B cell (primary cell): ENCODE measurements at regions of chr14 and their contacts with region 1.

Region 1: GRCh38 chr14:50860478-50861086 is 11.3 kb upstream of the ABHD12B start:
- DNase-seq: peak; percentile 90
- ATAC-seq: peak; percentile 71
- H3K4me3 ChIP-seq: peak overlapping the region; percentile 58 to 92 (median 69)
- H3K4me3 Mint-ChIP-seq: peak overlapping the region; percentile 95
- H3K27ac ChIP-seq: peak overlapping the region; percentile 34 to 44
- H3K27ac Mint-ChIP-seq: peak overlapping the region; percentile 91
- H3K4me1 ChIP-seq: peaks cover 9 to 14% of the 10 kb centered on the region in 2 donors
- H3K4me1 Mint-ChIP-seq: peaks cover 15% of the 10 kb centered on the region
- H3K27me3 ChIP-seq: no peaks in the 10 kb centered on the region
- H3K27me3 Mint-ChIP-seq: peaks cover 2% of the 10 kb centered on the region
- CTCF ChIP-seq: peak; percentile 87

Region 2: DNA sequence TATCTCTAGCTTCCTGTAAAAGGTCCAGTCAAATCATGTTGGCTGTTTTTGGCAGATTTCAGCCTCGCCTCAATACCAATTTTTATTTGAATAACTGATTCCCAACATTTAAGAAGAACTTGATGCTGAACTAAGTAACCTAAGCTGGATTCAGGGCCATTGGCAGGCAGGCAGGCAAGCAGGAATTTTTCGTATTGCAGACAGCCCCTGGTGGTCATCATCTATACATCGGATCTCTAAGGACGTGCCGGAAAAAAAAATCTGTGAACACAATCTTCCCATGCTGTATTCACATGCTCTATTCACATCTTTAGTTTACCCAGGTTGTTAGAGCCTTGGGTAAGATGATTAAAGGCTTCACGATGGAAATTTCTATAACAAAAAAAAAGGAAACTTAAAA is 751.2 kb before region 1 on chr14:
- CTCF ChIA-PET with region 1: no interaction called
- POLR2A ChIA-PET with region 1: no interaction called
- intact Hi-C with region 1: no loop called
- DNase-seq: no peak
- ATAC-seq: no peak
- H3K4me3 ChIP-seq: no peak overlapping the region
- H3K4me3 Mint-ChIP-seq: no peak overlapping the region
- H3K27ac ChIP-seq: peak overlapping the region in 1 of 2 donors; percentile 85
- H3K27ac Mint-ChIP-seq: no peak overlapping the region
- H3K4me1 ChIP-seq: peaks cover 28 to 34% of the 10 kb centered on the region in 2 donors
- H3K4me1 Mint-ChIP-seq: peaks cover 40% of the 10 kb centered on the region
- H3K27me3 ChIP-seq: no peaks in the 10 kb centered on the region
- H3K27me3 Mint-ChIP-seq: no peaks in the 10 kb centered on the region
- CTCF ChIP-seq: no peak

Region 3: DNA sequence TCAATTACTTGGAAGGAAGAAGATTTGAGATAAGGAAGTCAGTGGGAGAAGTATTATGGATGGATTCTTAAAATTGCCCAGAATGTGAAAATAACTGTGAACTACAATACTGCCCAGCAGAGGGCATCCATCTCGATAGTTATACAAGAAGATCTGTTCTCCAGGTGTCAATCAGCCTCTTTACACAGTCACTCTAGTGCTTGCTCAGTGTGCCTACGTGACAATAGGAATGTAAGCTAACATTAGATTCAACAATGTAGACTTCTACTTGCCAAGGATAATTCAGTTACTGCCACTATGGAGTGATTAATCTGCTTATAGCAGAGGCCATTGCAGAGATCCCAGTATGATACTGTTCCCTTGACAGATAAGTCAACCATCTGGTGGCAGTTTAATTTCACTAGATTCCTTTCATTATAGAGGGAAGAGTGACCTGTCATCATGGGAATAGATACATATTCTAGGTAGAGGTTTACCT is 317.6 kb before region 1 on chr14:
- CTCF ChIA-PET with region 1: interaction called, 13 read pairs
- POLR2A ChIA-PET with region 1: no interaction called
- intact Hi-C with region 1: loop called (anchors 1 kb)
- DNase-seq: peak; percentile 65
- ATAC-seq: peak; percentile 58
- H3K4me3 ChIP-seq: no peak overlapping the region
- H3K4me3 Mint-ChIP-seq: no peak overlapping the region
- H3K27ac ChIP-seq: no peak overlapping the region
- H3K27ac Mint-ChIP-seq: no peak overlapping the region
- H3K4me1 ChIP-seq: no peaks in the 10 kb centered on the region
- H3K4me1 Mint-ChIP-seq: peaks cover 8% of the 10 kb centered on the region
- H3K27me3 ChIP-seq: no peaks in the 10 kb centered on the region
- H3K27me3 Mint-ChIP-seq: no peaks in the 10 kb centered on the region
- CTCF ChIP-seq: peak; percentile 76

Region 4: DNA sequence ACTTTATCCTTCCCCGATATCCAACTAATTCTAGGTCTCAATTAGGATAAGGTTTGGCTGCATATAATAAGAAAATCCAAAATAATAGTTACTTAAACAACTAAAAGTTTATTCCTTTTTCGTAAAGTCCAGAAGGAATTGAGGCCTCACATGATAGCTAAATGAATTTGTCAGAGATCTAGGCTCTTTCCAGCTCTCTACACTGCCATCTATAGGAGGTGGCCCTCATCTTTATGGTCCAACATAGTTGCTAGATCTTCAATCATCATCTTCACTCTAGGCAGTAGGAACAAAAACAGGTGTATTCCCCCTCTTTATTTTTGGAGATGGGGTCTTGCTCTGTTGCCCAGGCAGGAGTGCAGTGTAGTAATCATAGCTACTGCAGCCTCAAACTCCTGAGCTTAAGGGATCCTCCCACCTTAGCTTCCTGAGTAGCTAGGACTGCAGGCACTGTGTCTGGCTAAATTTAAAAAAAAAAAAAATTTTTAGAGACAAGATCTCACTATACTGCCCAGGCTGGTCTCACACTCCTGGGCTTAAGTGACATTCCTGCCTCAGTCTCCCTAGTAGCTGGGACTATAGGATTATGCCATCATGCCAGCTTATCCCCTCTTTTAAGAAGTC is 146.0 kb before region 1 on chr14:
- CTCF ChIA-PET with region 1: interaction called, 30 read pairs
- POLR2A ChIA-PET with region 1: no interaction called
- intact Hi-C with region 1: no loop called
- DNase-seq: peak; percentile 67
- ATAC-seq: peak; percentile 61
- H3K4me3 ChIP-seq: no peak overlapping the region
- H3K4me3 Mint-ChIP-seq: no peak overlapping the region
- H3K27ac ChIP-seq: no peak overlapping the region
- H3K27ac Mint-ChIP-seq: no peak overlapping the region
- H3K4me1 ChIP-seq: no peaks in the 10 kb centered on the region
- H3K4me1 Mint-ChIP-seq: no peaks in the 10 kb centered on the region
- H3K27me3 ChIP-seq: no peaks in the 10 kb centered on the region
- H3K27me3 Mint-ChIP-seq: no peaks in the 10 kb centered on the region
- CTCF ChIP-seq: peak; percentile 74

Region 5: GRCh38 chr14:50773632-50774541 is 86.7 kb before region 1 on chr14:
- CTCF ChIA-PET with region 1: interaction called, 258 read pairs
- POLR2A ChIA-PET with region 1: interaction called, 7 read pairs
- intact Hi-C with region 1: loop called (anchors 1 kb)
- DNase-seq: peak; percentile 48
- ATAC-seq: peak; percentile 56
- H3K4me3 ChIP-seq: no peak overlapping the region
- H3K4me3 Mint-ChIP-seq: no peak overlapping the region
- H3K27ac ChIP-seq: peak overlapping the region in 1 of 2 donors; percentile 11
- H3K27ac Mint-ChIP-seq: peak overlapping the region; percentile 17
- H3K4me1 ChIP-seq: peaks cover 13 to 16% of the 10 kb centered on the region in 2 donors
- H3K4me1 Mint-ChIP-seq: peaks cover 16% of the 10 kb centered on the region
- H3K27me3 ChIP-seq: no peaks in the 10 kb centered on the region
- H3K27me3 Mint-ChIP-seq: no peaks in the 10 kb centered on the region
- CTCF ChIP-seq: peak; percentile 87

Region 6: GRCh38 chr14:50798048-50798421 is 62.5 kb before region 1 on chr14:
- CTCF ChIA-PET with region 1: interaction called, 178 read pairs
- POLR2A ChIA-PET with region 1: no interaction called
- intact Hi-C with region 1: no loop called
- DNase-seq: peak; percentile 69
- ATAC-seq: peak; percentile 78
- H3K4me3 ChIP-seq: no peak overlapping the region
- H3K4me3 Mint-ChIP-seq: peak overlapping the region; percentile 2
- H3K27ac ChIP-seq: no peak overlapping the region
- H3K27ac Mint-ChIP-seq: peak overlapping the region; percentile 53
- H3K4me1 ChIP-seq: peaks cover 56 to 64% of the 10 kb centered on the region in 2 donors
- H3K4me1 Mint-ChIP-seq: peaks cover 74% of the 10 kb centered on the region
- H3K27me3 ChIP-seq: no peaks in the 10 kb centered on the region
- H3K27me3 Mint-ChIP-seq: no peaks in the 10 kb centered on the region
- CTCF ChIP-seq: no peak

Region 7: GRCh38 chr14:50830932-50831725 is 29.5 kb before region 1 on chr14 and contains the start of gene NIN:
- CTCF ChIA-PET with region 1: interaction called, 47 read pairs
- POLR2A ChIA-PET with region 1: interaction called, 24 read pairs
- intact Hi-C with region 1: loop called (anchors 1 kb)
- DNase-seq: peak; percentile 88
- ATAC-seq: peak; percentile 83
- H3K4me3 ChIP-seq: peak within 1 kb of the TSS; percentile 70 to 90 (median 71)
- H3K4me3 Mint-ChIP-seq: peak within 1 kb of the TSS; percentile 99
- H3K27ac ChIP-seq: peak within 1 kb of the TSS; percentile 93 to 95
- H3K27ac Mint-ChIP-seq: peak within 1 kb of the TSS; percentile 99
- H3K4me1 ChIP-seq: peaks cover 49 to 60% of the 10 kb centered on the region in 2 donors
- H3K4me1 Mint-ChIP-seq: peaks cover 66% of the 10 kb centered on the region
- H3K27me3 ChIP-seq: no peaks in the 10 kb centered on the region
- H3K27me3 Mint-ChIP-seq: no peaks in the 10 kb centered on the region
- CTCF ChIP-seq: no peak
- total RNA-seq, gene NIN: 211 and 219 TPM in 2 replicates